ENCODE measurements at regions of chr4 and their contacts with region 1.

Region 1: GRCh38 chr4:76677571-76678326 is 220.2 kb downstream of the SOWAHB start:
- DNase-seq: no peak
- H3K4me3 Mint-ChIP-seq: no peak overlapping the region
- H3K27ac Mint-ChIP-seq: peak overlapping the region; percentile 60
- H3K4me1 Mint-ChIP-seq: peaks cover 67% of the 10 kb centered on the region
- H3K27me3 Mint-ChIP-seq: no peaks in the 10 kb centered on the region
- CTCF ChIP-seq: no peak

Region 2: DNA sequence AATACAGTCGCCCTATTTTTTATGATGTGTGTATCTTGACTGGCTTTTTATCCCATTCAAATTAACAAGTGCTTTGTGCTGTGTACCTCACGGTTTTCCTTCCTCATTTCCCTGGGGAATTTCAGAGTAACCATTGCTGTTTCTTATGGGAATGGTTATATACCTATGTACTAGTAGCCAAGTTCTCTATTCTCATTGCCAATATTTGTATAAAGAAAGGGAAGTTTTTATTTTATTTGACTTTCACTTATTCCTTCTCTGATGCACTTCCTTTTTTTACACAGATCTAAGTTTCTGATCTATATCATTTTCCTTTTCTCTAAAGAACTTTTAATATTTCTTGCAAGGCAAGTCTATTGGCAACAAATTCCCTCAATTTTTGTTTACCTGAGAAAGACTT is 38.9 kb after region 1 on chr4:
- CTCF ChIA-PET with region 1: interaction called, 4 read pairs
- intact Hi-C with region 1: loop called (anchors 2 kb)
- DNase-seq: no peak
- H3K4me3 Mint-ChIP-seq: peak overlapping the region; percentile 68
- H3K27ac Mint-ChIP-seq: peak overlapping the region; percentile 82
- H3K4me1 Mint-ChIP-seq: peaks cover 69% of the 10 kb centered on the region
- H3K27me3 Mint-ChIP-seq: no peaks in the 10 kb centered on the region
- CTCF ChIP-seq: no peak

Region 3: GRCh38 chr4:76723924-76724323 is 46.2 kb after region 1 on chr4:
- CTCF ChIA-PET with region 1: interaction called, 10 read pairs
- intact Hi-C with region 1: no loop called
- DNase-seq: peak; percentile 28
- H3K4me3 Mint-ChIP-seq: peak overlapping the region; percentile 30
- H3K27ac Mint-ChIP-seq: peak overlapping the region; percentile 81
- H3K4me1 Mint-ChIP-seq: peaks cover 79% of the 10 kb centered on the region
- H3K27me3 Mint-ChIP-seq: no peaks in the 10 kb centered on the region
- CTCF ChIP-seq: no peak

Region 4: GRCh38 chr4:77636902-77637301 is 959.2 kb after region 1 on chr4:
- CTCF ChIA-PET with region 1: no interaction called
- intact Hi-C with region 1: no loop called
- DNase-seq: peak; percentile 26
- H3K4me3 Mint-ChIP-seq: no peak overlapping the region
- H3K27ac Mint-ChIP-seq: no peak overlapping the region
- H3K4me1 Mint-ChIP-seq: no peaks in the 10 kb centered on the region
- H3K27me3 Mint-ChIP-seq: no peaks in the 10 kb centered on the region
- CTCF ChIP-seq: no peak